ENCODE measurements at regions of chr1 and their contacts with region 1.

Region 1: DNA sequence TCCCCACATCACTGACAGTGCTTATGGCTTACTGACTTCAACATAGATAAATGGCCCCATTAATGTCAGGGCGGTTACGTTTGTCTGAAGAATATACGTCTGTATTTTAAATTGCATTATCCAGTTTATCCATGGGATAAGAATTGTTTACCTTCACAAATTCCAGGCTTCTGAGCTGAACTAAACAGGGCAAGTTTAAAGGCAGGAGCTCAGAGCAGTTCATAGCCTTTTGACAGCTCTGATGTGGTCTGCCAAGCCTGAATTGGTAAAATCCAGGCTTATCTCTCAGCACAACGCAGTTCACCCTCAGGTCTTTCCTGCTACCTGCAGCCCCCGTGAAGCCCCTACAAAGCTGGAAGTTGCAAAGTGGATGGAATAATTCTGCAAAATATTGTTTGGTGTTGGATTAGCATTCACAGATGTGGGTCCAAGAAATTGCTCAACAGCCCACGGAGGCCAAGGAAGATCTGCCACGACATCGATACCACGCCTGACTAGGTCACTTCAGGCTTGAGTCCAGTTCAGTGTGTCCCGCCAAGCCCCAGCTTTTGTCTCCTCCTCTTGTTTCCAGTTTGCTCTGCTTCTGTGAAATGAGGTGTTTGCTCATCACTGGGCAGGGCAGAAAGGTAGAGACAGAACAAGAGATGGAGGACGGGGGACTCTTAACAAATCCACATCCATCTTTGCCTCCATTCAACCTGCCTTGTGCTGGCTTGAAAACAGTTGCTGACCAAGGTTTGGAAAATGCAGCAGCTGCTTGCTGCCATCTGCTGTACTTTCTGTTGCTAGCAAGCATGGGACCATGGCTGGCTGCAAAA is 79.8 kb upstream of the GREM2 start:
- DNase-seq: peak; percentile 26 to 63
- ATAC-seq: peak; percentile 94 to 95
- H3K4me3 ChIP-seq: no peak overlapping the region
- H3K27ac ChIP-seq: peak overlapping the region in 1 of 2 experiments; percentile 36; a peak in 1 of 6 replicates
- H3K4me1 ChIP-seq: peaks cover 3% of the 10 kb centered on the region; the same call in 1 of the 3 replicates
- CTCF ChIP-seq: peak; percentile 68
- EP300 ChIP-seq: no peak
- POLR2A ChIP-seq: no peak
- RAD21 ChIP-seq: peak; percentile 87

Region 2: DNA sequence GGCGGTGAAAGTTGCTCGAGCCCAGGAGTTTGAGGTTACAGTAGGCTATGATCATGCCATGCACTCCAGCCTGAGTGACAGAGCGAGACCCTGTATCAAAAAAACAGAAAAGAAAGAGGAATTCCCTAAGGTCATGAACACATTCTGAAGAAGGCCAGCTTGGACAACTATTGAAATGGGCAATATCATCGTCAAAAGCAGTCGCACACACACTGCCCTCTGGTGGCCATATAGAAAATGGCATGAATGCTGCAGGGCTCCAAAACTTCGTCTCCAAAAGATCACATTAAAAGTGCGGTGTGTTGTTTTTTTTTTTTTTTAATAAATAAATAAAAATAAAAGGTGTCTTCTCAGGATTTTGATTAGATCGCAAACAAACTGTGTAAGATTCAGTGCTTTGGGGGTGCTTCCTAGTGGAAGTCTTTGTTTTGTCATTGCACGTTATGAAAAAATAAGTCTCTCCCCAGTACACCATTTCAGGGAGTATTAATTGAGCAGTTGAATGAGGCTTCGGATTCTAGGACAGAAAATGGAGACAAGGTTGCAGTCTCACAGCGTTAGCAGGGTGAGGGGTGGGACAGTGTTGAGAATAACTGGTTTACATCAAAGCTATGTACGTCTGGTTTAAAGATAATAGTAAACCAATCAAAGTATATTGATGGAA is 687.5 kb before region 1 on chr1:
- CTCF ChIA-PET with region 1: interaction called, 13 read pairs
- POLR2A ChIA-PET with region 1: no interaction called
- DNase-seq: peak; percentile 37 to 46
- ATAC-seq: peak in 1 of 2 experiments; percentile 70; a peak in 3 of 6 replicates
- H3K4me3 ChIP-seq: no peak overlapping the region
- H3K27ac ChIP-seq: no peak overlapping the region
- H3K4me1 ChIP-seq: peaks cover 11% of the 10 kb centered on the region
- CTCF ChIP-seq: peak; percentile 75
- EP300 ChIP-seq: no peak
- POLR2A ChIP-seq: no peak
- RAD21 ChIP-seq: peak; percentile 15 to 26; a peak in 1 of 5 replicates

Region 3: DNA sequence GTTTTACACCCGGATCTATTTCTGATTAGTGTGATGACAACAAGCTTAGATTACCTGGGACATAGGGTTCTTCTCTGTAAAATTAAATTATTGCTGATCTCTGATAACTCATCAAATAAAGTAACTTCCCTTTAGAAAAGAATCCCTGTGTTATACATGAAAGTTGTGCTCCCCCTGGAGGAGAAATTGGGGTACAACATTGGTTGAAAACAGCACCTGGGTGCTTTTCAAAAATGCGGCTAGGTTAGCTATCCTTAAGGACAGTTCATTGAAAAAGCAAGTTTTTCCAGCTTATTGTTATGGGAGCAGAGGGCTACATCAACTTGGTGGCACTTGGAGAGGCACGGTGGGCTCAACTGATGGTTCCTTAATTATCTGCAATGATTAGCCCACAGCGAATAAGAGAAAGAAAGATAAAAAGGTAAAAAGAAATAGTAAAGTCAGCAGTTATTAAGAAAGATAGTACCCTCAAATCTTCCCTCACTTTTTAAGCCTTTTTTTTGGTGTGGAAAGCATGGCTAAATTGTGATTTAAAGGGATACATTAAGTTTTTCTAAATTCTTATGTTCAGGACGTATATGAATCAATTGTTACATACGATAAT is 502.2 kb before region 1 on chr1:
- CTCF ChIA-PET with region 1: interaction called, 37 read pairs
- POLR2A ChIA-PET with region 1: no interaction called
- DNase-seq: peak; percentile 40 to 61
- ATAC-seq: peak in 1 of 2 experiments; percentile 60; a peak in 2 of 6 replicates
- H3K4me3 ChIP-seq: no peak overlapping the region
- H3K27ac ChIP-seq: 0 out of 6 replicates have a peak overlapping the region, but pooled peaks of 1 of the 2 experiments have one; percentile 42
- H3K4me1 ChIP-seq: peaks cover 23% of the 10 kb centered on the region
- CTCF ChIP-seq: peak; percentile 80
- EP300 ChIP-seq: no peak
- POLR2A ChIP-seq: no peak
- RAD21 ChIP-seq: peak; percentile 62 to 65

Measured in A549 (cell line).